Breast epithelium (tissue), 4 donors: ENCODE measurements at regions of chr4 and their contacts with region 1.

Region 1: GRCh38 chr4:26873391-26874026 is 12.9 kb downstream of the STIM2 start:
- DNase-seq: no peak
- H3K4me3 ChIP-seq: no peak overlapping the region
- H3K27ac ChIP-seq: no peak overlapping the region
- H3K4me1 ChIP-seq: no peaks in the 10 kb centered on the region
- H3K27me3 ChIP-seq: no peaks in the 10 kb centered on the region
- CTCF ChIP-seq: no peak
- POLR2A ChIP-seq: no peak

Region 2: DNA sequence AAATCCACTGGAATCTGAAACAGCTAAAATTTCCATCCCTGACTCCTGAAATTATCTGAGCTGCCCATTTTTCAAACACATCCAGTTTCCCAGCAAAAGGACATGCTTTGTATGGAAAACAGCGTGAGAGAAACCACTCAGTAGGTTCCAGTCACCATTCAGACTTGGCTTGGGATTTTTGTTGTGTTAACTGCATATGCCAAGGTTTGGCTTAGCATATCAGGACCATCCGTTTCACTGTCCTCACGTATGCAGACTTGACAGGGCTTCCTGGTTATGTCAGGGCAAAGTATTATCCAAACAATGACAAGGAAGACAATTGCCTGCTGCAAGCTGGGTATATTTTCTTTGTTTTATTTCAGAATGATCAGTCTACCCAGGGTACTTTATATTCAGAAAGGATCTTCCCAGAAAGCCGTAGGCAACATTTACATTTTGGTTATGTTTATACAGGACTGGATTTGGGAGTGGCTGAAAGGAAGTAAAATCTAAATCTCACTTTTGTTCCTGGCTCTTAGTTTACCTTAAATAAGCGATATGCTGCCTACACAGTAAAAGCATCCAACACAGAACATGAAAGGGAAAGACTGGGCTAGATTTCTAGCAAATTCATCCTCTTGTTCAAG is 341.9 kb before region 1 on chr4:
- intact Hi-C with region 1: loop called (anchors 5 kb)
- DNase-seq: no peak
- H3K4me3 ChIP-seq: no peak overlapping the region
- H3K27ac ChIP-seq: no peak overlapping the region
- H3K4me1 ChIP-seq: no peaks in the 10 kb centered on the region
- H3K27me3 ChIP-seq: no peaks in the 10 kb centered on the region
- CTCF ChIP-seq: no peak
- POLR2A ChIP-seq: no peak

Region 3: GRCh38 chr4:26959654-26960047 is 86.1 kb after region 1 on chr4:
- intact Hi-C with region 1: no loop called
- DNase-seq: no peak
- H3K4me3 ChIP-seq: no peak overlapping the region
- H3K27ac ChIP-seq: no peak overlapping the region
- H3K4me1 ChIP-seq: no peaks in the 10 kb centered on the region
- H3K27me3 ChIP-seq: no peaks in the 10 kb centered on the region
- CTCF ChIP-seq: no peak
- POLR2A ChIP-seq: no peak